Left ventricle myocardium inferior (tissue), 1 donor: ENCODE measurements at regions of chr1 and their contacts with region 1.

Region 1: DNA sequence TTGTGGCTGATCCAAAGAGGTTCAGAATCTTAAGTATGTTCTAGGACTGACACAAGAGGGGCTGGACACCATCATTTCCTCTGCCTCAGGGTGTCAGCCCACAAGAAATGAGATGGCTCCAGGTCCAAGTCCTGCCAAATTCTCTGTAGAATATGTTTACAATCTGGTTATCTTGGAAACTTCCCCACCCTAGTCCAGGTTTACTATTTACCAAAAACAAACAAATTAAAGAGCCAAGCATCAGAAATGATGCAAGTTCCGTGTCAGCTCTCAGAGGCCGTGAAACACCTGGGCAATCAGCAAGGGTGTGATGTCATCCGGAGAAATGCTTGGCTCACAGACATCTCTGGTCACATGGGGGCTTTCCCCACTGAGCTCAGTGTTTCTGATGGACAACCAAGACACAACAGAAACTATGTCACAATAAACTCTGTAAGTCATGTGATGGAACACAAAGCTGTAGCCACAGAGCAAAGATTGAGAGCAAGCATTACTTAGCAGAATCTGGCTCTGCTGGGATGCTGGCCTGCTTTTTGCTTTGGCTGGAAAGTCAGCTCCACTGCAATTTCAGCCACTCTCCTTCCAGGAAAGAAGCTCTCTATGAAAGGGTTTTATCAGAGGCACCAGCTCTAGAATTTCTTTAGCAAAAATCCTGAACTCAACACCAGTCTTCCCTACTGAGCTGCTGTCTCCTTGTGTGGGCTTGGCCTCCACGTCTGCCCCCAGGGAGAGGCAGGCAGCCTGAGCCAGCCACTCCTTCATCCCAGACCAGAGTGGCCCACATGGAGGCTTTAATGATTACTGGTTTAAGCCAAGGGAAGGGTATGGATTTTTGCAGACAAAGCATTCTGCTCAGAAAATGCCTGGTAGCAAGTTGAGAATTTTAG is 55.9 kb downstream of the NENF start:
- DNase-seq: no peak
- H3K4me3 ChIP-seq: no peak overlapping the region
- H3K27ac ChIP-seq: no peak overlapping the region
- H3K4me1 ChIP-seq: peaks cover 17% of the 10 kb centered on the region
- H3K27me3 ChIP-seq: no peaks in the 10 kb centered on the region
- CTCF ChIP-seq: no peak

Region 2: GRCh38 chr1:212586206-212587015 is 97.8 kb after region 1 on chr1:
- intact Hi-C with region 1: no loop called
- DNase-seq: no peak
- H3K4me3 ChIP-seq: no peak overlapping the region
- H3K27ac ChIP-seq: no peak overlapping the region
- H3K4me1 ChIP-seq: no peaks in the 10 kb centered on the region
- H3K27me3 ChIP-seq: peaks cover 57% of the 10 kb centered on the region
- CTCF ChIP-seq: no peak

Region 3: GRCh38 chr1:212609701-212610468 is 121.2 kb after region 1 on chr1:
- intact Hi-C with region 1: loop called (anchors 10 kb)
- DNase-seq: no peak
- H3K4me3 ChIP-seq: peak overlapping the region; percentile 86
- H3K27ac ChIP-seq: peak overlapping the region; percentile 98
- H3K4me1 ChIP-seq: peaks cover 78% of the 10 kb centered on the region
- H3K27me3 ChIP-seq: peaks cover 23% of the 10 kb centered on the region
- CTCF ChIP-seq: no peak